Heart right ventricle (tissue), 16 donors: ENCODE measurements at regions of chr1 and their contacts with region 1.

Region 1: GRCh38 chr1:78114034-78114956 is 68.5 kb downstream of the GIPC2 start:
- DNase-seq: peak; percentile 32 to 66
- ATAC-seq: peak; percentile 72 to 86 (median 82)
- H3K4me3 ChIP-seq: peak overlapping the region in 1 of 10 donors; percentile 6
- H3K27ac ChIP-seq: peak overlapping the region in 6 of 10 donors; percentile 7 to 51 (median 22)
- H3K4me1 ChIP-seq: peaks cover 0 to 9% (median 5%) of the 10 kb centered on the region in 9 donors
- H3K27me3 ChIP-seq: no peaks in the 10 kb centered on the region
- CTCF ChIP-seq: peak; percentile 71 to 98 (median 88)

Region 2: GRCh38 chr1:76371941-76372340 is 1742.4 kb before region 1 on chr1:
- intact Hi-C with region 1: no loop called
- DNase-seq: no peak
- ATAC-seq: no peak
- H3K4me3 ChIP-seq: no peak overlapping the region
- H3K27ac ChIP-seq: no peak overlapping the region
- H3K4me1 ChIP-seq: no peaks in the 10 kb centered on the region
- H3K27me3 ChIP-seq: no peaks in the 10 kb centered on the region
- CTCF ChIP-seq: no peak

Region 3: DNA sequence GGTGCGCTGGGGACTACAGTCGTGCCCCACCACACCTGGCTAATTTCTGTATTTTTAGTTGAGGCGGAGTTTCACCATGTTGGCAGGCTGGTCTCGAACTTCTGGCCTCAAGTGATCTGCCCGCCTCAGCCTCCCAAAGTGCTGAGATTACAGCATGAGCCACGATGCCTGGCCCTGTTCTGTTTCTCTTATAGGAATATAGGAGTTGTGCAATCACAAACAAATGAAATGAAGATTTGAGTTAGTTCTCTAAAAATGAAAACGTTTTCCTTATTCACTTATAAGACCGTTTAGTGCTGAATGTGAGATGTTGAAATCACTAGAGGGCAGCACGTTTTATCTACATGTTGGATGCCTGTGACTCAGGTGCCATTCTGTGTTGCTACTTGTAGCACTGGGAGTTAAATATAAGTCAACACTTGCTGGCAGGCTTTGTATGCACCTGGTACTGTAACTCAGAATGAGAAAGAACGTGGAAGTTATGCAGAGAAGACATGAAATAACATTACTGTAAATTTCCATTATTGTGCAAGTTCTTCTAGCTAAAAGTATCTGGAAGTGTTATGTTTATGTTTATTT is 289.1 kb before region 1 on chr1:
- intact Hi-C with region 1: loop called in 1 of 10 experiments (anchors 10 kb)
- DNase-seq: peak in 1 of 2 donors; percentile 28
- ATAC-seq: peak; percentile 39 to 80 (median 68)
- H3K4me3 ChIP-seq: no peak overlapping the region
- H3K27ac ChIP-seq: peak overlapping the region in 6 of 10 donors; percentile 0 to 23 (median 16)
- H3K4me1 ChIP-seq: peaks cover 0 to 27% (median 16%) of the 10 kb centered on the region in 9 donors
- H3K27me3 ChIP-seq: no peaks in the 10 kb centered on the region
- CTCF ChIP-seq: peak in 7 of 9 donors; percentile 17 to 55 (median 45)

Region 4: DNA sequence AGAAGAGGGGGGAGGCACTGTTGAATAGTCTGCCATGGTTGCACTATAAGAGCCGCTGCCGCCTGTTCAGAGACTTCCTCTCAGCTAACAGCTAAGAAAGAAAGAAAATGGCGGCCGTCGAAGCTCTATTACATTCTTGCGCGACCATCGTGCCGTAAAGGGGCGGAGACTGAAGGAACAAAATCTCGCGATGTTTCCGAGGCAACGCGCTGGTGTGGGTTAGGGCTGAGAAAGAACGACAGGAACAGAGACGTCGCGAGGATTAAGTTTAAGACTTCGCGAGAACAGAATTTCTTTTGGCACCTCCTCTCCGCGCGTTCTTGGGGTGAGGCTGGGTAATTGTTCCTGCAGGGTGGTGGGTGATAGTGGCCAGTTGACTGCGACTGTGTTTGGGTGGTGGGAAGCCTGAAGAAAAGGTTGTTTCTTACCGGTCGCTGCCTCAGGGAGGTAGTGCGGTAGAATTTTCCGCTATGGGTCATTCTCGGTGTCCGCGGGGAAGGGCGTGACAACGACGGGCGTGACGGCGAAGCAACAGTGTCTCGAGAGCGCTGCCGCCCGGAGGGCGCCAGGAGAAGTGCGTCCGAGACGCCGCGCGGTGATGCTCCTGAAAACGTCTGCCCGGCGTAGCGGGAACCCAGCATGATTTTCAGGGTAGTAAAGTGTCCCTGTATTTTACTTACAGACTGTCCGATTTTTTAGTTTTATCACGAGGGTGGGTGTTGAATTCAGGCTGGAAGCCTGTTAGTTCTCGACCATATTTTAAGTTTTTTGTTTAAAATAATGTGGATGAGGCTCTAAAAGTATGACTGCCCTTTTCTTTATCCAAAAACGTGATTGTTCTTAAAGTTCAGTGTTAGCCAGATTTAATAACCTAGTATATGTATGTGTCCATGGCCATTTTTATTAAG is 135.1 kb before region 1 on chr1 and contains the start of gene FUBP1:
- intact Hi-C with region 1: loop called (anchors 1 to 10 kb)
- DNase-seq: peak; percentile 89 to 98
- ATAC-seq: peak; percentile 94 to 97 (median 94)
- H3K4me3 ChIP-seq: peak within 1 kb of the TSS; percentile 64 to 85 (median 74)
- H3K27ac ChIP-seq: peak within 1 kb of the TSS; percentile 83 to 99 (median 97)
- H3K4me1 ChIP-seq: peaks cover 11 to 60% (median 55%) of the 10 kb centered on the region in 9 donors
- H3K27me3 ChIP-seq: no peaks in the 10 kb centered on the region
- CTCF ChIP-seq: peak; percentile 55 to 89 (median 76)
- total RNA-seq, gene FUBP1: 54.1 to 77.6 (median 72.1) TPM

Region 5: GRCh38 chr1:77986810-77987209 is 127.5 kb before region 1 on chr1:
- intact Hi-C with region 1: loop called in 1 of 10 experiments (anchors 10 kb)
- DNase-seq: no peak
- ATAC-seq: peak in 1 of 8 donors; percentile 36
- H3K4me3 ChIP-seq: no peak overlapping the region
- H3K27ac ChIP-seq: peak overlapping the region in 1 of 10 donors; percentile 15
- H3K4me1 ChIP-seq: peaks cover 0 to 53% (median 26%) of the 10 kb centered on the region in 9 donors
- H3K27me3 ChIP-seq: no peaks in the 10 kb centered on the region
- CTCF ChIP-seq: no peak

Region 6: DNA sequence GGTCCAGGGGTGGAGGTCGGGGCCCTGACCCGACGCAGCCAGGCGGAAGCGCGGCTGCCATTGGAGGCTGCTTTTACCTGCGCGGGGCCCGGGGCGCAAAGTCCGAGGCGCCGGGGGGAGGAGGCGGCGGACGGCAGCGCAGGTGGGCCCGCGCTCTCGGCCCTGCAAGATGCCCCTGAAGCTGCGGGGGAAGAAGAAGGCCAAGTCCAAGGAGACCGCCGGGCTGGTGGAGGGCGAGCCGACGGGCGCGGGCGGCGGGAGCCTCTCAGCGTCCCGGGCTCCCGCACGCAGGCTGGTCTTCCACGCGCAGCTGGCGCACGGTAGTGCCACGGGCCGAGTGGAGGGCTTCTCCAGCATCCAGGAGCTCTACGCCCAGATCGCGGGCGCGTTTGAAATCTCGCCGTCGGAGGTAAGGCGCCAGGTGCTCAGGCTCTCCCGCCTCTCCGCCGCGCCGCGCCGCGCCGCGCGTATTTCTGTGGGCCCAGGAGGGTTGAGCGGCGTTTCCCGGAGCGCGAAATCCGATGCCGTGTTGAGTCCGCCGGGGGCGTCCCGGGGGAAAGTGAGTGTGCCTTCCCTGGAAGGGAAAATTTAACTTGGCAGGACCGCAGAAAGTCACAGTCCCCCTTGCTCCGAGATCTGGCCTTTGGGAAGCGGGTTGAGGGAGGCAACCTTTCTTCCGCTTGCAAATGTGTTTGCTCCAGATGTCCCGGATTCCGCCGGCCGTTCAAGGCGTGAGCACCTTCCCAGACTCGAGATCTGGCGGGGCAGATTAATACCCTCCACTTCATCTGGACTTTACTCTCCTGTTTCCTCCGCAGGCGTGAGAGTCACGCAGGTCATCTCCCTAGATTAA is 68.1 kb before region 1 on chr1 and contains the start of gene GIPC2:
- intact Hi-C with region 1: loop called in 4 of 10 experiments (anchors 5 to 10 kb)
- DNase-seq: peak; percentile 24 to 49
- ATAC-seq: peak; percentile 60 to 79 (median 68)
- H3K4me3 ChIP-seq: peak within 1 kb of the TSS; percentile 64 to 93 (median 77)
- H3K27ac ChIP-seq: peak within 1 kb of the TSS in 9 of 10 donors; percentile 64 to 88 (median 81)
- H3K4me1 ChIP-seq: peaks cover 0 to 55% (median 32%) of the 10 kb centered on the region in 9 donors
- H3K27me3 ChIP-seq: peaks cover 0 to 38% (median 0%) of the 10 kb centered on the region in 7 donors
- CTCF ChIP-seq: no peak
- total RNA-seq, gene GIPC2: 1.3 to 7.4 (median 3.7) TPM

Region 7: GRCh38 chr1:78292361-78292760 is 178.1 kb after region 1 on chr1:
- intact Hi-C with region 1: no loop called
- DNase-seq: no peak
- ATAC-seq: peak in 1 of 8 donors; percentile 79
- H3K4me3 ChIP-seq: no peak overlapping the region
- H3K27ac ChIP-seq: peak overlapping the region in 2 of 10 donors; percentile 3 to 17
- H3K4me1 ChIP-seq: no peaks in the 10 kb centered on the region
- H3K27me3 ChIP-seq: no peaks in the 10 kb centered on the region
- CTCF ChIP-seq: no peak